Psoas muscle (tissue), 8 donors: ENCODE measurements at regions of chr11 and their contacts with region 1.

Region 1: DNA sequence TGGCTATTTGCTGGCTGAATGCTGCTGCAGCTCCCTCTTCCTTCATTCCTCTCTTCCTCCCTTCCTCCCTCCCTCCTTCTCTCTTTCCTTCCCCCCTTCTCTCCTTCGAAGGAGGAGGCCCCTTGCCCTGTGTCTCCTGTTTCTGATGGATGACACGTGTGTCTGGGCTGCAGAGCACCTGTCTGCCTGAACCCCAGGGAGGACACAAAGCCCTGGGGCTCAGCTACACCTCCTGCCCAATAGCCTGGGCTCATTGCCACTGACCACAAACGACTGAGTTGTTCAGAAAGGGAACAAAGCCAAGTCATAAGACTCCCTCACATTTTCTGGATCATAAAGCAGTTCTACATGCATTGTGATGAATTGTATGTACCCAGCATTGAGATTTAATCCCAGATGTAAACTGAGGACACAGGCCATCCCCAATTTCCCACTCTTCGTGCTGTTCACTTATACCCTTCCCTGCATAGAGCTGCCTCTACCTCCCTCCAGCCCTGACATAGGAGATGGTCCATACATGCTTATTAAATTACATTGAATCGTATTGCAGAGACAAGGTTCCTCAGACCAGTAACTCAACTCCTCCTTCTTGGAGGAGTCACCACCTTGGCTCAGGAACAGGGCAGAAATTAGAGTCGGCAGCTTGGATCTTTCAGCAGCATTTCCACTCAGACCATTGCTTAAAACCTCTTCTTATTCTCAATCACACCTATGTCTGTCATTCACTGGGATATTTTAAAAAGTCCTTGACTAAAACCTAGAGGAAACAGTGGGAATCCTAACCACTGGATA is 1.2 kb downstream of the CSRP3 start:
- DNase-seq: peak; percentile 52 to 60
- ATAC-seq: peak; percentile 51 to 68 (median 64)
- H3K4me3 ChIP-seq: peak overlapping the region; percentile 66
- H3K27ac ChIP-seq: peak overlapping the region; percentile 90
- H3K4me1 ChIP-seq: peaks cover 25% of the 10 kb centered on the region
- H3K27me3 ChIP-seq: no peaks in the 10 kb centered on the region
- CTCF ChIP-seq: no peak

Region 2: DNA sequence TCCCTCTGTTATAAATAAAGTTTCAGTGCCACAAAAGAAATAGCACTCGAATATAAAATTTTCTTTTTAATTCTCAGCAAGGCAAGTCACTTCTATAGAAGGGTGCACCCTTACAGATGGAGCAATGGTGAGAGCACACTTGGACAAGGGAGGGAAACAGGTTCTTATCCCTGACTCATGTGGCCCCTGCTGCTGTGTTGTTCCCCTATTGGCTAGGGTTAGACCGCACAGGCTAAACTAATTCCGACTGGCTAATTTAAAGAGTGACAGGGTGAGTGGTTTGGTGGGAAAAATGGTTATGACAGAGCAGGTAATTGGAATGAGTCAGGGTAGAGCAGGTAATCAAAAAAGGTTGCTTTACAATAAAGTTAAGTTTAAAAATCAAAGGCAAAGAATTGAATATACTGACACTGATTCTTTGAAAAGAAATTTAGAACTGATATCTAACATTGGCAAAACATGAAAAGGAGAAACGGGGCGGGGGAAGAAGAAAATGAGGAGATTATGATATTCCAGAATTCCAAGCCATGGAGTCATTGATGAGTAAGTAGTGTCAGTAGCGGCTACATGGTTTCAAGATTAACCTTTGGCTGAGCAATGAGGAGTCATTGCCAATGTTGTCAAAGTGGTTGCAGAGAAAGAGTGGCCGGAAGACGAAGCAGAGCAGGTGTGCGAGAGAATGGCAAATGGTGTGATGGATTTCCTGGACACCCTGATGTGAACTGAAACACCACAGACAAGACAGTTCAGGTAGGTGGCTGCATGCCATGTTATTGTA is 213.0 kb before region 1 on chr11:
- intact Hi-C with region 1: no loop called
- DNase-seq: no peak
- ATAC-seq: no peak
- H3K4me3 ChIP-seq: no peak overlapping the region
- H3K27ac ChIP-seq: no peak overlapping the region
- H3K4me1 ChIP-seq: no peaks in the 10 kb centered on the region
- H3K27me3 ChIP-seq: no peaks in the 10 kb centered on the region
- CTCF ChIP-seq: no peak

Region 3: GRCh38 chr11:19160847-19161246 is 39.8 kb before region 1 on chr11:
- intact Hi-C with region 1: no loop called
- DNase-seq: no peak
- ATAC-seq: peak in 2 of 4 donors; percentile 53 to 60
- H3K4me3 ChIP-seq: no peak overlapping the region
- H3K27ac ChIP-seq: no peak overlapping the region
- H3K4me1 ChIP-seq: no peaks in the 10 kb centered on the region
- H3K27me3 ChIP-seq: no peaks in the 10 kb centered on the region
- CTCF ChIP-seq: peak; percentile 31

Region 4: DNA sequence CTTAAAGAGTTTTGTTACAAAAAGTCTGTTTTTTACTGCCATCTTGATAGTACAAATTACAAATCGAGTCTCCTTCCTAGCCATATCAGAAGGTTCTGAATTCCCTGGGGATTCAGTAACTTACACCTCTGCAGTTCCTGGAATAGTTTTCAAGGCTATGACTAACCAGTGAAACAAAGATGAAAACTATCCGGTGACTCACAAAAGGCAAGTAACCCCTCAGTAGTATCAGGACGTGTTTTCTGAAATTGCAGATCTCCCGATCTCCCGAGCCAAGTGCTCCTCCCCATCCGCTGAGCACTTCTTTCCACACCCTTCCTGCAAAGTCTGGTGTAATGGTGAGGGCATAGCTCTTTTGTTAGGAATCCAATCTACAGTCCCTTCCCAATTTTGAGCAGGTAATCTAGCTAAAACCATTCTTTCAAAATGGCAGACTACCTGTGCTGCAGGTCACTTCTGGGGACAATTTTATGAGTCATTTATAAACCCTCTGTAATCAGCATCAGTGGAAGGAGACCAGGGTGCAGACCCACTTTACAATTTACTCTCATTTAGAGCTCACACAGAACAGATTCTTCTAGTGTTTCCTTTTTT is 32.4 kb after region 1 on chr11:
- intact Hi-C with region 1: loop called (anchors 5 kb)
- DNase-seq: no peak
- ATAC-seq: peak; percentile 67 to 84 (median 78)
- H3K4me3 ChIP-seq: no peak overlapping the region
- H3K27ac ChIP-seq: peak overlapping the region; percentile 79
- H3K4me1 ChIP-seq: peaks cover 12% of the 10 kb centered on the region
- H3K27me3 ChIP-seq: no peaks in the 10 kb centered on the region
- CTCF ChIP-seq: no peak

Region 5: GRCh38 chr11:19240420-19241259 is 40.0 kb after region 1 on chr11 and contains the start of gene E2F8:
- intact Hi-C with region 1: loop called in 1 of 2 experiments (anchors 5 kb)
- DNase-seq: peak; percentile 91 to 95
- ATAC-seq: peak; percentile 93 to 97 (median 96)
- H3K4me3 ChIP-seq: peak within 1 kb of the TSS; percentile 81
- H3K27ac ChIP-seq: peak within 1 kb of the TSS; percentile 79
- H3K4me1 ChIP-seq: peaks cover 10% of the 10 kb centered on the region
- H3K27me3 ChIP-seq: peaks cover 0 to 27% (median 9%) of the 10 kb centered on the region in 3 donors
- CTCF ChIP-seq: no peak
- total RNA-seq, gene E2F8: 1.4 to 11.6 (median 3.9) TPM